ENCODE measurements at regions of chr10 and their contacts with region 1.

Region 1: GRCh38 chr10:11823122-11823988 is at the start of gene PROSER2:
- DNase-seq: peak; percentile 74
- H3K4me3 Mint-ChIP-seq: peak within 1 kb of the TSS; percentile 93
- H3K27ac Mint-ChIP-seq: peak within 1 kb of the TSS; percentile 89
- H3K4me1 Mint-ChIP-seq: peaks cover 38% of the 10 kb centered on the region
- H3K27me3 Mint-ChIP-seq: no peaks in the 10 kb centered on the region
- CTCF ChIP-seq: no peak
- total RNA-seq, gene PROSER2: 29.2 and 58.0 TPM in 2 replicates

Region 2: DNA sequence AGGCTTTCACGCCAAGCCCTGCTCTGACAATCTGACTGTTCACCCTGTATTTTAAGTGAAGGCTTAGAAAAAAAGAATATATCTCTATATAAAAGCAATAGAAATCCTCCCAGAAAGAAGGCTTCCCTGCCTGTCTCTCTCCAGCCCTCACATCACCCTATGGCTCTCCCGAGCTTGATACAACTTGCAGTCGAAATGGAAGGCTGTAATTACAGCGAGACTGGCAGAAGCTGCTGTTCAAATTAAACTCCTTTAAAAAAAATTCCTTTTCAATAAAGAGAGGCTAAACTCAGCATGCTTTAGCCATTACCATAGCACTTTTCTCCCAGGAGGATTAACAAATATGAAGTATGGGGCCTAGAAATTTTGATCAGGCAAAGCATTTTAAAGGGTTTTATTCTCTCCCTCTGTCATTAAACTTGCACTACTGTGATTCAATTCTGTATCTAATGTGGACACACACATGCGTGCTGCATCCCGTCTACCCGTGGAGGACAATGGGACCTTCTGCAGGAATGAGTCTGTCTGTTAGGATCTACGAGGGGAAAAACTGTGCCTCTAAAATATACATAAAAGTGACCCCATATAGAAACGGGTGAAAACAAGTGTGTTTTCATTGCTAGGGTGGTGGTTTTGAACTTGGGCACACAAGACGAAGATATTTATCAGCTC is 435.7 kb before region 1 on chr10:
- CTCF ChIA-PET with region 1: no interaction called
- POLR2A ChIA-PET with region 1: no interaction called
- intact Hi-C with region 1: no loop called
- DNase-seq: no peak
- H3K4me3 Mint-ChIP-seq: no peak overlapping the region
- H3K27ac Mint-ChIP-seq: no peak overlapping the region
- H3K4me1 Mint-ChIP-seq: no peaks in the 10 kb centered on the region
- H3K27me3 Mint-ChIP-seq: peaks cover 22% of the 10 kb centered on the region
- CTCF ChIP-seq: no peak

Region 3: GRCh38 chr10:11782793-11783557 is 40.4 kb before region 1 on chr10:
- CTCF ChIA-PET with region 1: interaction called, 23 read pairs
- POLR2A ChIA-PET with region 1: interaction called, 8 read pairs
- intact Hi-C with region 1: loop called (anchors 5 kb)
- DNase-seq: peak; percentile 73
- H3K4me3 Mint-ChIP-seq: no peak overlapping the region
- H3K27ac Mint-ChIP-seq: no peak overlapping the region
- H3K4me1 Mint-ChIP-seq: no peaks in the 10 kb centered on the region
- H3K27me3 Mint-ChIP-seq: no peaks in the 10 kb centered on the region
- CTCF ChIP-seq: peak; percentile 53

Region 4: GRCh38 chr10:11793762-11794479 is 29.4 kb before region 1 on chr10:
- CTCF ChIA-PET with region 1: interaction called, 44 read pairs
- POLR2A ChIA-PET with region 1: no interaction called
- intact Hi-C with region 1: loop called (anchors 5 kb)
- DNase-seq: peak; percentile 55
- H3K4me3 Mint-ChIP-seq: no peak overlapping the region
- H3K27ac Mint-ChIP-seq: peak overlapping the region; percentile 21
- H3K4me1 Mint-ChIP-seq: peaks cover 17% of the 10 kb centered on the region
- H3K27me3 Mint-ChIP-seq: no peaks in the 10 kb centered on the region
- CTCF ChIP-seq: no peak

Region 5: GRCh38 chr10:11838298-11838852 is 15.0 kb after region 1 on chr10:
- CTCF ChIA-PET with region 1: interaction called, 12 read pairs
- POLR2A ChIA-PET with region 1: interaction called, 37 read pairs
- intact Hi-C with region 1: no loop called
- DNase-seq: peak; percentile 79
- H3K4me3 Mint-ChIP-seq: peak overlapping the region; percentile 25
- H3K27ac Mint-ChIP-seq: peak overlapping the region; percentile 85
- H3K4me1 Mint-ChIP-seq: peaks cover 32% of the 10 kb centered on the region
- H3K27me3 Mint-ChIP-seq: no peaks in the 10 kb centered on the region
- CTCF ChIP-seq: no peak

Region 6: DNA sequence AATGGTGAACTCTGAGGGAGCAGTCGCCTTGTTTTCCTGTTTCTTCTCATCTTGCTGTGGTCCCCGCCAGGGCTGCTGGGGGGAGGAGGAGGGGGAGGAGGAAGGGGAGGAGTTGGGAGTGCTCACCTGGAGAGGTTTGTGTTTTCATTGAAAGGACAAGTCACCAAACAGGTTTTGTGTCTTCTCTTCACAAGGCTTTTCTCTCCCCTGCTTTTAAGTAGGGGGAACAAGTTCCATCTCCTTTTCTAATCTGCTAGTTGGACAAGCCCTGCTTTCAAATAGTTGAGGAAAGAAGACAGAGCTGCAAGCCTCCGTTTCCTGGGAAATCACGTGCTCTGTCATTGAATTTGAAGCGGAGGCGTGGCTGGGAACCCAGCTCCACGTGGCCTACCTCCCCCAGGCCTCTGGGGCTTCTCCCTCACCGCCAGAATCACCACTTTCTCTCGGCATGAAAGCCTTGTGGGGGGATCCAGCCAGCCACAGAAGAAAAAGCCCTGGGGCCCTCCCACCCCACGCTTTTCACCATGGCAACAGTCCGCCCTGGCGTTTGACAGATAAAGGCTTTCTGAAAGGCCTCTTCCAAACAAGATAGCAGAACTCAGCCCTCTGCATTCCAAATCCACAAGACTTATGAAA is 51.3 kb after region 1 on chr10:
- CTCF ChIA-PET with region 1: no interaction called
- POLR2A ChIA-PET with region 1: interaction called, 10 read pairs
- intact Hi-C with region 1: no loop called
- DNase-seq: peak; percentile 77
- H3K4me3 Mint-ChIP-seq: no peak overlapping the region
- H3K27ac Mint-ChIP-seq: peak overlapping the region; percentile 96
- H3K4me1 Mint-ChIP-seq: peaks cover 21% of the 10 kb centered on the region
- H3K27me3 Mint-ChIP-seq: no peaks in the 10 kb centered on the region
- CTCF ChIP-seq: no peak